OCI-LY7 (cell line): ENCODE measurements at regions of chr6 and their contacts with region 1.

Region 1: DNA sequence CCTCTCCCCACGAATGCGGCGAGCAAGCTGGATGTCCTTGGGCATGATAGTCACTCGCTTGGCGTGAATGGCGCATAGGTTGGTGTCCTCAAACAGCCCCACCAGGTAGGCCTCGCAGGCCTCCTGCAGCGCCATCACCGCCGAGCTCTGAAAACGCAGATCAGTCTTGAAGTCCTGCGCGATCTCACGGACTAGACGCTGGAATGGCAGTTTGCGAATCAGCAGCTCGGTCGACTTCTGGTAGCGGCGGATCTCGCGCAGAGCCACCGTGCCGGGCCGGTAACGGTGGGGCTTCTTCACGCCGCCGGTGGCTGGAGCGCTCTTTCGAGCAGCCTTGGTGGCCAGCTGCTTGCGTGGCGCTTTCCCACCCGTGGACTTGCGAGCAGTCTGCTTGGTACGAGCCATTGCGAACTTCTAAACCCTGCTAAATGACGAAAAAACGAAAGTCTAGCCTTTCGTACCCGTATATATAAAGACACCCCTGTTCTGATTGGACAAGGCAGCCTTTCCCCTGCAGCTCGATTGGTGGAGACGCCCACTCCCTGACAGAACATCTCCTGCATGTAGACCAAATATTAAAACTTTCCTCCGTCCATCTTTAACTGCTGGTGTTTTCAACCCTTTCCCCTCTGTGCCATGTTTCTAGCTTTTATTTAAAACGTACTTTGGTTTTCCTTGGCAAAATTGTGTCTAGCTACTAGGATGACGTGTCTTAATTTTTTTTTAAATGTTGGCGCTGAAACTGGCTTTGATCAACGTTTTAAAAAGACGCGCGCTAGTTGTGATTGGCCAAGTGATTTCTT is 109.8 kb downstream of the HFE start:
- DNase-seq: peak; percentile 96
- H3K4me3 ChIP-seq: peak overlapping the region; percentile 91
- H3K27ac ChIP-seq: peak overlapping the region; percentile 93
- H3K4me1 ChIP-seq: peaks cover 39% of the 10 kb centered on the region
- CTCF ChIP-seq: peak; percentile 31; the same call in 1 of the 2 replicates

Region 2: DNA sequence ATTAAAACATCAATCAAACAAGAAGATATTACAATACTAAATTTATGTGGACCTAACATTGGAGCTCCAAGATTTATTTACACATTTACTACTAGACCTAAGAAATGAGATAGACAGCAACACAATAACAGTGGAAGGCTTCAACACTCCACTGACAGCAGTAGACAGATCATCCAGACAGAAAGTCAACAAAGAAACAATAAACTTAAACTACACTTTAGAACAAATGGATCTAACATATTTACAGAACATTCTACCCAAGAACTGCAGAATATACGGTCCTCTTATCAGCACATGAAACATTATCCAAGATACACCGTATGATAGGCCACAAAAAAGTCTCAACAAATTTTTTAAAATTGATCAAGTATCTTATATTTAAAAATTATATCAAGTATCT is 392.2 kb before region 1 on chr6:
- CTCF ChIA-PET with region 1: no interaction called
- POLR2A ChIA-PET with region 1: no interaction called
- intact Hi-C with region 1: no loop called
- DNase-seq: no peak
- H3K4me3 ChIP-seq: no peak overlapping the region
- H3K27ac ChIP-seq: no peak overlapping the region
- H3K4me1 ChIP-seq: no peaks in the 10 kb centered on the region
- CTCF ChIP-seq: no peak

Region 3: GRCh38 chr6:26045065-26045927 is 151.8 kb before region 1 on chr6:
- CTCF ChIA-PET with region 1: interaction called, 3 read pairs
- POLR2A ChIA-PET with region 1: interaction called, 43 read pairs
- intact Hi-C with region 1: no loop called
- DNase-seq: peak; percentile 97
- H3K4me3 ChIP-seq: peak overlapping the region; percentile 67
- H3K27ac ChIP-seq: peak overlapping the region; percentile 99
- H3K4me1 ChIP-seq: peaks cover 66% of the 10 kb centered on the region
- CTCF ChIP-seq: peak; percentile 54

Region 4: GRCh38 chr6:26156076-26156849 is 40.8 kb before region 1 on chr6:
- CTCF ChIA-PET with region 1: no interaction called
- POLR2A ChIA-PET with region 1: interaction called, 233 read pairs
- intact Hi-C with region 1: loop called (anchors 1 kb)
- DNase-seq: peak; percentile 88
- H3K4me3 ChIP-seq: peak overlapping the region; percentile 79
- H3K27ac ChIP-seq: peak overlapping the region; percentile 99
- H3K4me1 ChIP-seq: peaks cover 28% of the 10 kb centered on the region
- CTCF ChIP-seq: no peak

Region 5: DNA sequence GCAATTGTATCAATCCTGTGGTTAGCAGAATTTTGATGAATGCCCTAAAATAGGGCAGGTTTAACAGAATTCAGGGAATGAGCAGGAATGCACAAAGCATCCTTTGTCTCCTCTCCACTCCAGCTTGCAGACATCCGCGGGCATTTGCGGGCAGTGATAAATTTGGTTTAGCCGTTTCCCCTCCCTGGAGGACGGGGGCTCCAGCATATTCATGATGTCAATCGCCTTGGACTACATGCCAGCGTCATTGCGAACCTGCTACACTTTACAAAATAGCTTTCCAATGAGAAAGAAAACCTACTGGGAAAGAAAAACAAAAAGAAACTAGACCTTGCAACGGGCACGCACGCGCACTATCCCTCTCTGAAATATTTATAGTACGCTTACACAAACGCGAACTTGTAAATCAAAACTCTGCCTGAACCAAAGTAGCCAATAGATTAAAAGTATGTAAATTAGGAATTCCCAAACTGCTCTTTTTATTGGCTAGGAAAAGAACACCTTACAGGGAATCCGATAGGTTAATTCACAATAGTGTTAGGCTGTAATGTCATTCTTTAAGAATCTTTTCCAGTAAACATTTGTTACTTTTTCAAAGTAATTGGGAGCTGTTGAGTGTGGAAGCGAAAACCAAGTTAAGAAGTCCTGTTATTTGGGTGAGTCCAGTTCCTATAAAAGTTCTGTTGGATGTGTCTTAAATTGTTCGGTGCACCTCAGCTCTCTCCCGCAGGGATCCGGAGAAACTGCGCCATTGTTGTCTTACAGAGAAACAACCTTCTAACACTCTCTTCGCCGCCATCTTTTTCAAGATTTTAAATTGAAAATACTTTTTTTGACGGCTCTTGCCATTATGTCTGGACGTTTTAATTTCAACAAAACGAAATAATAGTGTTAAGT is 26.9 kb after region 1 on chr6:
- CTCF ChIA-PET with region 1: no interaction called
- POLR2A ChIA-PET with region 1: interaction called, 505 read pairs
- intact Hi-C with region 1: no loop called
- DNase-seq: no peak
- H3K4me3 ChIP-seq: peak overlapping the region; percentile 59
- H3K27ac ChIP-seq: peak overlapping the region; percentile 60
- H3K4me1 ChIP-seq: peaks cover 60% of the 10 kb centered on the region
- CTCF ChIP-seq: no peak

Region 6: GRCh38 chr6:26531897-26532296 is 334.9 kb after region 1 on chr6:
- CTCF ChIA-PET with region 1: no interaction called
- POLR2A ChIA-PET with region 1: no interaction called
- intact Hi-C with region 1: no loop called
- DNase-seq: no peak
- H3K4me3 ChIP-seq: peak overlapping the region; percentile 69
- H3K27ac ChIP-seq: peak overlapping the region; percentile 93
- H3K4me1 ChIP-seq: peaks cover 44% of the 10 kb centered on the region
- CTCF ChIP-seq: no peak

Region 7: DNA sequence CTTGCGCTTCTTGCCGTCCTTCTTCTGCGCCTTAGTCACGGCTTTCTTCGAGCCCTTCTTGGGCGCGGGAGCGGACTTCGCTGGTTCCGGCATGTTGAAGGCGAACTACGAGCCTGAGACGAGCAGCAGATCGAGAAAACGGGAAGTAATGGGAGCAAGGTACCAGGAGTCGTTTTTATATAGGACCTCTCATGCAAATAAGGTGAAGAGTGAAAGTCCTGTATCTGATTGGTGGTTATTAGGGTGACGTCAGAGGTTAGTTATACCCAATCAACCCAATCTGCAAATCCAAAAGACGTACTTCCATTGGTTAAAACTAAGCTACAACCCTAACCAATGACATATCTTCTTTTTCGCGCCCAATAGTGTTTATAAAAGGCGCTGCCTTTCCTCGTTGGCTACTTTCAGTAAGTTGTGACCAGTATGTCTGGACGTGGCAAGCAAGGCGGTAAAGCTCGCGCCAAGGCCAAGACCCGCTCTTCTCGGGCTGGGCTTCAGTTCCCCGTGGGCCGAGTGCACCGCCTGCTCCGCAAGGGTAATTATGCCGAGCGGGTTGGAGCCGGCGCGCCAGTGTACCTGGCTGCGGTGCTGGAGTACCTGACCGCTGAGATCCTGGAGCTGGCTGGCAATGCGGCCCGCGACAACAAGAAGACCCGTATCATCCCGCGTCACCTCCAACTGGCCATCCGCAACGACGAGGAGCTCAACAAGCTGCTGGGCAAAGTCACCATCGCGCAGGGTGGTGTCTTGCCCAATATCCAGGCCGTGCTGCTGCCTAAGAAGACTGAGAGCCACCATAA is 949.9 kb after region 1 on chr6:
- CTCF ChIA-PET with region 1: no interaction called
- POLR2A ChIA-PET with region 1: interaction called, 11 read pairs
- intact Hi-C with region 1: no loop called
- DNase-seq: peak; percentile 98
- H3K4me3 ChIP-seq: peak overlapping the region; percentile 73
- H3K27ac ChIP-seq: peak overlapping the region; percentile 99
- H3K4me1 ChIP-seq: peaks cover 60% of the 10 kb centered on the region
- CTCF ChIP-seq: no peak

Region 8: DNA sequence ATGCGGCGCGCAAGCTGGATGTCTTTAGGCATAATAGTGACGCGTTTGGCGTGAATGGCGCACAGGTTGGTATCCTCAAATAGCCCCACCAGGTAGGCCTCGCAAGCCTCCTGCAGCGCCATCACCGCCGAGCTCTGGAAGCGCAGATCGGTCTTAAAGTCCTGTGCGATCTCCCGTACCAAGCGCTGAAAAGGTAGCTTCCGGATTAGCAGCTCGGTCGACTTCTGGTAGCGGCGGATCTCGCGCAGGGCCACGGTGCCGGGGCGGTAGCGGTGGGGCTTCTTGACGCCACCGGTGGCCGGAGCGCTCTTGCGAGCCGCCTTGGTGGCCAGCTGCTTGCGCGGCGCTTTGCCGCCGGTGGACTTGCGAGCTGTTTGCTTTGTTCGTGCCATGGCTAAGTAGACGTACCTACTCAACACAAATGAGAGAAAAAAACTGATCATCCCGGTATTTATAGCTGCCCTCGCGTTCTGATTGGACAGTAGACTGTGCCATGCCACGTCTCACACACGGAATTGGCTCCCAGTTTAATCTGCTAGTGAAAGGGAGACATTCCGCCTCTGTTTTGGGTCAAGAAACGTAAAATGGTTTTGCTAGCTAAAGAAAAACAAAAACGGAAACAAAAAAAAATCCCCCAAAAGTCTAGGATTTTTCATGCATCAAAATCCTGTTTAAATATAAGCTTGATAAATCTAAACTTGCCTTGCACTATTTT is 1675.0 kb after region 1 on chr6:
- CTCF ChIA-PET with region 1: no interaction called
- POLR2A ChIA-PET with region 1: interaction called, 84 read pairs
- intact Hi-C with region 1: loop called (anchors 2 kb)
- DNase-seq: peak; percentile 95
- H3K4me3 ChIP-seq: peak overlapping the region; percentile 69
- H3K27ac ChIP-seq: peak overlapping the region; percentile 99
- H3K4me1 ChIP-seq: peaks cover 71% of the 10 kb centered on the region
- CTCF ChIP-seq: peak; percentile 44